ENCODE measurements at regions of chr1 and their contacts with region 1.

Region 1: GRCh38 chr1:51296383-51297357 is 33.7 kb downstream of the TTC39A start:
- DNase-seq: peak; percentile 62
- H3K4me3 ChIP-seq: peak overlapping the region in 1 of 3 experiments; percentile 28
- H3K27ac ChIP-seq: no peak overlapping the region
- H3K4me1 ChIP-seq: peaks cover 7% of the 10 kb centered on the region
- H3K27me3 ChIP-seq: no peaks in the 10 kb centered on the region
- CTCF ChIP-seq: peak; percentile 89 to 98

Region 2: DNA sequence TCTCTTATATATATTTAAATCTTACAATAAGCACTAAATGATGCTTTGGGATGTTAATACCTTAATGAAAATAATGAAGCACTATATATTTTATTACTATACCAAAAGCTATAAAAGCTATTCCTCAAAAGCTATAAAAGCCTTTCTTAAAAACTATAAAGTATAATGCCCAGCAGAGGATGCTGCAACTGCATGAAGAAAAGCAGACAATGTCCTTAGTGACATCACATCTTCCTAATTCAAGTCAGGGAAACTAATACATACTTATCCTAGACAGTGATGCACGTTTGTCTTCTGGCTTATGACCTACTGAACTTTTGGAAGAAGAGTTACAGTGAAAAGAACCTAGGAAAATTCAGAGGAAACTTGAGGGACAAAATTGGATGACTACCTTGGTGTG is 208.2 kb before region 1 on chr1:
- CTCF ChIA-PET with region 1: no interaction called
- dilution Hi-C with region 1: no loop called
- in situ Hi-C with region 1: no loop called
- intact Hi-C with region 1: loop called (anchors 10 kb)
- DNase-seq: no peak
- H3K4me3 ChIP-seq: no peak overlapping the region
- H3K27ac ChIP-seq: no peak overlapping the region
- H3K4me1 ChIP-seq: peaks cover 4% of the 10 kb centered on the region
- H3K27me3 ChIP-seq: no peaks in the 10 kb centered on the region
- CTCF ChIP-seq: peak; percentile 30 to 69

Region 3: DNA sequence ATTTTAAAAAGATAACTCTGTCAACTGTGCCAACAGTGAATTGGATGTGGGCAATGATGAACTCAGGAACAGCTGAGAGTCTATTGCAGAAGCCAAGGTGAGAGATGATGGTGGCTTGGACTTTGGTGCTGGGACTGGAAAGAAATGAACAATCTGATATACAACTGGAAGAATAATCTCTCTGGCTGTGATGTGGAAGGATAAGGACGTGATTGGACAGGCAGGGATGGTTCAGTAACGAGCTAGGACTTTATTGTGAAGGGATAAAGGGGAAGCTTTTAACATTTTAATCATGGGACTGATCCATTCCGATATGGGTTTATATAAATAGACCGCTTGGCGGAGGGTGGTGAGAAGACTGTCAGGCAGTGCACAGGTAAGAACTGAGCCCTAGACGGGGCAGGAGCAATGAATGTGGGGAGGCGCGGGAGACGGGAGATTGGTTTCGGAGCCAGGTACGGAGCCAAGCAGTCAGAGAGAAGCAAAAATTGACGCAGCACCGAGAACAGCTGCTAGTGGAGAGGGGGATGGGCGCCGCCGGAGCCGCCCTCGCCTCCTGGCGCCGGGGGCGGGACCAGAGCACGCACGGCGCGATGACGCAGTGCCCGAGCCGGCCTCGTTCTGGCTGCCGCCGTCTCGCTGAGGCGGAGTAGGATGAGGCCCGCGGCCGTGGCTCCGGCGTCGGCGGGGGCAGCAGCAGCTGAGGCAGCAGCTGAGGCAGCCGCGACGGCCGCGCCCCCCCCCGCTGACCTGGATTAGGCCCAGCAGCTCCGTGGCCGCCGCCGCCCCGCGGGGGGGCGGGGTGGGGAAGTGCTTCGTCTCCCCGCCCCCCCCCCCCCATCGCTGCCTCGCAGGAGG is 60.8 kb before region 1 on chr1 and contains the start of gene RNF11:
- CTCF ChIA-PET with region 1: no interaction called
- dilution Hi-C with region 1: no loop called
- in situ Hi-C with region 1: no loop called
- intact Hi-C with region 1: loop called (anchors 1 kb)
- DNase-seq: peak; percentile 91
- H3K4me3 ChIP-seq: peak within 1 kb of the TSS; percentile 79 to 97 (median 88)
- H3K27ac ChIP-seq: peak within 1 kb of the TSS; percentile 89
- H3K4me1 ChIP-seq: peaks cover 16% of the 10 kb centered on the region
- H3K27me3 ChIP-seq: no peaks in the 10 kb centered on the region
- CTCF ChIP-seq: no peak
- total RNA-seq, gene RNF11: 82.7 to 92.0 TPM

Measured in mammary epithelial cell (primary cell).